SK-N-SH (cell line): ENCODE measurements at regions of chr6 and their contacts with region 1.

Region 1: GRCh38 chr6:32868257-32868788 is 14.3 kb downstream of the PSMB9 start:
- DNase-seq: peak; percentile 58
- H3K4me3 ChIP-seq: no peak overlapping the region; a peak in 1 of 4 replicates
- H3K27ac ChIP-seq: no peak overlapping the region
- H3K4me1 ChIP-seq: no peaks in the 10 kb centered on the region
- H3K27me3 ChIP-seq: peaks cover 33% of the 10 kb centered on the region
- CTCF ChIP-seq: peak; percentile 97
- EP300 ChIP-seq: no peak
- RAD21 ChIP-seq: peak; percentile 88

Region 2: DNA sequence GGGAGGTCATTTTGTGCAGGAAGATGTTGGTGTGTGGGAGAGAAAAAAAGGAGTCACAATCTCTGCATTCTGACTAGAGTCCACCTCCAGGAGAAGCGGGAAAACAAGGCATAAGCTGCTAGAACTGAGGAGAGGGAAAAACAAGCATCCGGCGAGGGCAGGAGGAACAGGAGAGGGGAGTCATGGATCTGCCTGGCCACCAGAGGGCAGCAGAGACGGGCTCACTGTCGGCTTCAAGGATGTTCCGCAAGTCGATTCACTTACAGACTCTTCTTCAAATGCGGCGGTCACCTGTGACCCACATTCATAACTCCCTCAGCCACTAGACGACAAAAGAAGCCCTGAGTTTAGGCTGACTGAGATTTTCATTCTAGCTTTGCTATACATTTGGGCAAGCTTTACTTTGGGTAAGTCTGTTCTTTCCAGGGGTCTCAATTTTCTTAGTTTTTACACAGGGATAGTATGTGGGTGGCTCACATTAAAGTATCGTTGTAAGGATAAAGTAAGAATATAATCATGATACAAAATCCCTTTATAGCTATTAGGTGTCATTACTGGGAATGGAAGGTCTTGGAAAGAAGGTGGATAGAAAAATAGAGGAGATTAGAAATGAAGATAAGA is 454.8 kb before region 1 on chr6:
- CTCF ChIA-PET with region 1: interaction called, 30 read pairs
- POLR2A ChIA-PET with region 1: no interaction called
- DNase-seq: peak; percentile 63
- H3K4me3 ChIP-seq: 0 out of 4 replicates have a peak overlapping the region, but pooled peaks of 1 of the 2 experiments have one; percentile 9
- H3K27ac ChIP-seq: no peak overlapping the region
- H3K4me1 ChIP-seq: no peaks in the 10 kb centered on the region
- H3K27me3 ChIP-seq: peaks cover 46% of the 10 kb centered on the region
- CTCF ChIP-seq: peak; percentile 91
- EP300 ChIP-seq: no peak
- RAD21 ChIP-seq: peak; percentile 72

Region 3: DNA sequence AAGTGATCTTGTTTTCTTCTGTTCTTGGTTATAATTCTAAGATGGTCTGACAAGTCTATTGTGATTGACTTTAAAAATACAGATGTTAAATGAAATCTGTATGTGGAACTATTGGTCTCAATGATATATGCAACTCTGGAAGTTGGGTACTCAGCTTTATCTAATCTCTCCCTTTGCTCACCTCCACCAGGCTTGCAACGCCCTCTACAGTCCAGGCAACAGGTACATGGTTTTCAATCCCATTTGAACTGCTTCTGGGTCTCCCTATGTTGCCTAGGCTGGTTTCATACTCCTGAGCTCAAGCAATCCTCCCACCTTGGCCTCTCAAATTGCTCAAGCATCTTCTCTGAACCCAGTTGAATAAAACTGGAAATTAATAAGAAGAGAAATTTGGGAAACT is 176.3 kb before region 1 on chr6:
- CTCF ChIA-PET with region 1: no interaction called
- POLR2A ChIA-PET with region 1: no interaction called
- DNase-seq: no peak
- H3K4me3 ChIP-seq: no peak overlapping the region
- H3K27ac ChIP-seq: no peak overlapping the region
- H3K4me1 ChIP-seq: no peaks in the 10 kb centered on the region
- H3K27me3 ChIP-seq: no peaks in the 10 kb centered on the region
- CTCF ChIP-seq: no peak; the same call in 1 of the 2 replicates
- EP300 ChIP-seq: no peak
- RAD21 ChIP-seq: no peak

Region 4: GRCh38 chr6:32774426-32774825 is 93.9 kb before region 1 on chr6:
- CTCF ChIA-PET with region 1: no interaction called
- POLR2A ChIA-PET with region 1: no interaction called
- DNase-seq: no peak
- H3K4me3 ChIP-seq: no peak overlapping the region
- H3K27ac ChIP-seq: no peak overlapping the region
- H3K4me1 ChIP-seq: no peaks in the 10 kb centered on the region
- H3K27me3 ChIP-seq: peaks cover 13% of the 10 kb centered on the region
- CTCF ChIP-seq: no peak
- EP300 ChIP-seq: no peak
- RAD21 ChIP-seq: no peak

Region 5: DNA sequence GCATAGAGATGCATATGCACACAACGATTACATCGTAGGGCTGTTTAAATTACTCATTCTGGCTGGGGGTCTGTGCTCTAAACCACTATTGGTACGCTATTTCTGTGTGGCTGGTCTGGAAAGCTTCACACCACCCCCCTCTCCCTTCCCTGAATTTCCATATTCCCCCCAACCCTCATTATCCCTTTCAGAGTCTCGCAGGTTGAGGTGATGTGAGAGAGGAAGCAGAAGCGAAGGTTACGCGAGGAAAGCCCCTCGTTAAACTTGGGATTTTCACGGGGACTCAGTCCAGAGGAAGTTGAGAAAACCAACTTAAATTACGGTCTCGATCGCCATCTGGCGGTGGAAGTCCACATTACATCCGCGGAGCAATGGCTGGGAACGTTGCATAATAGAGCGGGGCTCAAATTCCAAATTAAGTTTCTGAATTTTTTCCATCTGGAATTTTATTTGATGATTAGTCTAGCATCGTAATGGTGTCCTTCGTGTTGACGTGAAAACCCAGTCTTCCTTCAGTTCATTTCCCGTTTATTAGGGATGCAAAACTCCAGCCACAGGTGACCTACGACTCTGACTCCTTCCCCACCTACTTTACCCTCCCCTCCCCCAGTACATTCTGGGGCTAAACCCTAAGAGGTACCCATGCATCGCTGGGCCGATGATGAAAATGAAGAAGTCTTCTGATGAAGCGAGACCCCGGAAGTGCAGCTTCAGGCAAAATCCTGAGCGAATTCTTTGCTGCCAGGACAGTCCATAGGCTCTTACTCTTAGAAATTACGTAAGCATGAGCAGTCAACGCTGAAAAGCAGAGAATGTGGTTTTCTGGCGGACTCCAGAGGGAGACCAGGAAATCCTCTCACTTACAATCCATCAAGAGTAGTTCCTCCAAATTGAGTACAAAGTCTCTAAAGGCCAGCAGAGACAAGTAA is 71.2 kb before region 1 on chr6:
- CTCF ChIA-PET with region 1: interaction called, 21 read pairs
- POLR2A ChIA-PET with region 1: no interaction called
- DNase-seq: peak; percentile 48
- H3K4me3 ChIP-seq: peak overlapping the region; percentile 25 to 52
- H3K27ac ChIP-seq: no peak overlapping the region
- H3K4me1 ChIP-seq: no peaks in the 10 kb centered on the region; a peak in 1 of 4 replicates
- H3K27me3 ChIP-seq: peaks cover 37% of the 10 kb centered on the region; the same call in 1 of the 2 replicates
- CTCF ChIP-seq: peak; percentile 83
- EP300 ChIP-seq: no peak
- RAD21 ChIP-seq: peak; percentile 78

Region 6: DNA sequence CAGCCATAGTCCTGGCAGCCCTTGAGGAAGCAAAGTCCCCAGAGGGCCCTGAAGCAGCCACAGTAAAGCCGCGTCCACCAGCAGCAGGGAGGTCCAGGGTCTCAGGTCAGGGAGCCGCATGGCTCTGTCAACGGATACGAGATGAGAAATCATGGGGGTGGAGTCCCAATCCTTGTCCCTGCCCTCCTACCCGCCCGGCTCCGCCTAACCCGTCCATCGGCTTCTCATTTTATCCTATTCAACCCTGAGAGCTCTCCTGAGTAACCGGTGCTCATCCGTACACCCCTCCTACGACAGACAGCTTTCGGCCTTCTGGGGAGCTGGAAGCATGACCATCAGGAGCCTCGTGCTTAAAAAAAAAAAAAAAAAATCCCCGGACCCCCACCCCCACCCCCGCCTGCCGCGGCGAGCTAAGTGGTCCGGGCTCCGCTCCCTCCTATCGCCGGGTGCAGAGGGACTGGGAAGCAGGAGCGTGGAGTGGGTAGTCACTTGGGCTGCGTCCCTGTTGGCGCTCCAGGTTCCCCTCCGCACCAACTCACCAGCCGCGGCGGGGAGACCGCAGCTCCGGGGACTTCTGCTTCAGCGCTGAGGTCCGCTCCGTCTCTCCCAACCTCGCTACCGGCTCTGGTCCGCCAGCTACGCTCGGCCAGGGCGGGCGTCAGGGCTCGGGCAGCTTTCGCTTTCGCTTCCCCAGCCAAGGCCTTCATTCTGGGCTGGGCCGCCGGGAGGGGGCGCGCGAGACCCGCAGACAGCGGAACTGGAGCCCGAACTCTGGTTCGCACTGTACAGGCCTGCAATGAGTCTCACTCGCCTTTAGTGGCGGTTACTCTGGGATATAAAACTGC is 30.0 kb before region 1 on chr6 and contains the start of gene TAP2:
- CTCF ChIA-PET with region 1: interaction called, 223 read pairs
- POLR2A ChIA-PET with region 1: interaction called, 4 read pairs
- DNase-seq: peak; percentile 95
- H3K4me3 ChIP-seq: peak within 1 kb of the TSS; percentile 87 to 90
- H3K27ac ChIP-seq: peak within 1 kb of the TSS; percentile 87 to 88
- H3K4me1 ChIP-seq: peaks cover 0 to 8% of the 10 kb centered on the region in 2 experiments; a peak in 1 of 4 replicates
- H3K27me3 ChIP-seq: no peaks in the 10 kb centered on the region
- CTCF ChIP-seq: peak; percentile 96
- EP300 ChIP-seq: peak in 1 of 2 experiments; percentile 38; a peak in 1 of 4 replicates
- RAD21 ChIP-seq: peak; percentile 85
- polyA plus RNA-seq, gene TAP2: 14.0 and 19.9 TPM in 2 replicates

Region 7: GRCh38 chr6:32879691-32880090 is 11.4 kb after region 1 on chr6:
- CTCF ChIA-PET with region 1: interaction called, 32 read pairs
- POLR2A ChIA-PET with region 1: no interaction called
- DNase-seq: no peak
- H3K4me3 ChIP-seq: no peak overlapping the region; a peak in 1 of 4 replicates
- H3K27ac ChIP-seq: no peak overlapping the region
- H3K4me1 ChIP-seq: no peaks in the 10 kb centered on the region
- H3K27me3 ChIP-seq: peaks cover 42% of the 10 kb centered on the region
- CTCF ChIP-seq: no peak
- EP300 ChIP-seq: no peak
- RAD21 ChIP-seq: no peak

Region 8: DNA sequence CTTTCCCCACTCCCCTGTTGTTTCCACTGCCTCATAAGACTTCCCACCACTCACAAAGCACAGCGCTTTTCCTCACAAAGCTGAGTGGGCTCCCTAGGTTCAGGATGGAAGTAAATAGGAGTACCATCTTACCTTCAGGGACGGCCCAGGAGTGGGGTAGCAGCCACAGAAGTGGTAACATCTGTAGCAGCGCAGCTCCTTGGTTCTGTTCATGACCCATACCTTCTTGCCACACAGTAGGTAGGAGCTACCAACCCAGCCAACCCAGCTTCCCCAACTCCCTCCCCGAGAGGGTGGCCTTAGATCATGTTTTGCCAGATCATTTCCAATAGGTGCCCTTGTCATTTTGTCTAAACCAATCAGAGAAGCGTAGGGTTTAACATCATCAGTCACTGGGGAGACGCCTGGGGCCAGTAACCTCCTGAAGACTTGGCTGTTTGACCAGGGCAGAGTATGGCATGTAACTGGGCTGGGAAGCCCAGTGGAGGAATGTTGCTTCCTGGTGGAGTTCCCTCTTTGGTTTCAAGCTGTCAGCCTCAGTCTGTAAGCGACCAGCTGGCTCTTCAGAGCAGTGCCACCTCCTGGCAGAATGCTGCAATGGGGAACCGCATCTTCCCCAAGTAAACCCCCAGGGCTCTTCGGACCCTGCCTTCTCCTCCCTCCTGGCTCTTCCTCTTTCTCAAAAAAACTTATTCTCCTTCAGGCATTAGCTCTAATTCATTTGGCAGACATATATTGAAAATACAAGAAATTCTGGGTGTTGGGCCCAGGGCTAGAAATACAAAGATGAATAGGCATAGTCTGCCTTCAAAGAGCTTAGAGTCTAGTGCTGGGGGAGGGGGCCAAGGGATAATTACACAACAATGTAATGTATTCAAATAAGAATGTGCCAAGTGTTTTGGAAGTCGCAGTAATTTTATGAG is 84.8 kb after region 1 on chr6 and contains the start of gene HLA-DMA:
- CTCF ChIA-PET with region 1: interaction called, 13 read pairs
- POLR2A ChIA-PET with region 1: no interaction called
- DNase-seq: peak; percentile 42
- H3K4me3 ChIP-seq: peak within 1 kb of the TSS in 1 of 2 experiments; percentile 27; a peak in 1 of 4 replicates
- H3K27ac ChIP-seq: no peak within 1 kb of the TSS
- H3K4me1 ChIP-seq: peaks cover 0 to 6% of the 10 kb centered on the region in 2 experiments; a peak in 1 of 4 replicates
- H3K27me3 ChIP-seq: no peaks in the 10 kb centered on the region
- CTCF ChIP-seq: peak; percentile 77
- EP300 ChIP-seq: no peak
- RAD21 ChIP-seq: peak; percentile 47
- polyA plus RNA-seq, gene HLA-DMA: 1.2 and 1.5 TPM in 2 replicates